ENCODE measurements at regions of chr20 and their contacts with region 1.

Region 1: DNA sequence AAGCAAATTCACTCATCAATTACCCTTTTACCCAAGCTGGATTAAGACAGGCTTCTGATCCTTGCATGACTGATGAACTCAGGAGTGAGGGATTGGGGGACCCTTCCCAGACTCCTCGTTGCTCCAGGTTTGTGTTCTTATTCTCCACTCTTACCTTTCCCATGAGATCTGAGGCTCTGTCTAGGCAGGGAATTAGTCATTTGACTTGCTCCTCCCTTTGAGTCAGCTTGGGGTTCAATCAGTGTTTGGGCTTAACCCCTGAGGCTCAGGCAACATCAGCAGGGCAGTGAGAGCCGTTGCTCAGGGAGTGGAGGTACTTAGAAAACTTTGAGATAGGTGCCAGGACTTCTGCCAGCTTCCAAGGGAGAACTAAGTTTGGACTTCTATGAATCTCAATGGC is 20.7 kb upstream of the TOX2 start:
- DNase-seq: no peak
- ATAC-seq: no peak

Region 2: GRCh38 chr20:43941476-43942200 is 47.7 kb after region 1 on chr20:
- intact Hi-C with region 1: loop called (anchors 1 kb)
- DNase-seq: no peak
- ATAC-seq: peak; percentile 31